Upper lobe of right lung (tissue), 1 donor: ENCODE measurements at regions of chr5 and their contacts with region 1.

Region 1: GRCh38 chr5:135880278-135880677 is 15.4 kb downstream of the IL9 start:
- DNase-seq: no peak
- ATAC-seq: no peak
- H3K4me3 ChIP-seq: no peak overlapping the region
- H3K27ac ChIP-seq: no peak overlapping the region
- H3K4me1 ChIP-seq: no peaks in the 10 kb centered on the region
- H3K27me3 ChIP-seq: peaks cover 20% of the 10 kb centered on the region
- CTCF ChIP-seq: no peak

Region 2: GRCh38 chr5:135714126-135714894 is 166.0 kb before region 1 on chr5:
- intact Hi-C with region 1: no loop called
- DNase-seq: no peak
- ATAC-seq: no peak
- H3K4me3 ChIP-seq: no peak overlapping the region
- H3K27ac ChIP-seq: no peak overlapping the region
- H3K4me1 ChIP-seq: no peaks in the 10 kb centered on the region
- H3K27me3 ChIP-seq: no peaks in the 10 kb centered on the region
- CTCF ChIP-seq: no peak

Region 3: GRCh38 chr5:135979510-135979909 is 99.2 kb after region 1 on chr5:
- intact Hi-C with region 1: no loop called
- DNase-seq: no peak
- ATAC-seq: no peak
- H3K4me3 ChIP-seq: no peak overlapping the region
- H3K27ac ChIP-seq: no peak overlapping the region
- H3K4me1 ChIP-seq: no peaks in the 10 kb centered on the region
- H3K27me3 ChIP-seq: no peaks in the 10 kb centered on the region
- CTCF ChIP-seq: no peak

Region 4: DNA sequence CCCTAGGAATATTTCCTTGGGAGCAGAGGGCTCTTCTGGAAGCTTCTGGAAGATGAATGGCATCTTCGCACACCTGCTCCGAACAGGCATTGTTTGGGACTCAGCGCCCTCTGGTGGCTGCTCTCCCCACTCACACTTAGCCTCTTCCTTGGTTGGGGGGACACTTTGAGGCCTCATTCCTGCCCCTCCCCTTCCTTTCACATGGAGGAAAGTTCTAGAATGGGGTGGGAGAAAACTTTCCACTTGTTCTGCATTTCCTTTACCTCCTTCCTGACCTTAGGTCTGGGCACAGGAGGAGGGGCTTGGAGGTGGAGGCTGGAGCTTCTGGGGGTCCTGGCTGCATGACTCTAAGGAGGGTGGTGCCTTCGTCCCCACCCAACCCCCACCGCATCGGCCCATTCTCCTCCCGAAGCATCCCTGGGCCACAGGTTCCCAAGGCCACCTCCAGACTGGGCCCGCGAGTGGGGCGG is 332.0 kb after region 1 on chr5:
- intact Hi-C with region 1: loop called (anchors 5 kb)
- DNase-seq: peak; percentile 78
- ATAC-seq: peak; percentile 70
- H3K4me3 ChIP-seq: no peak overlapping the region
- H3K27ac ChIP-seq: no peak overlapping the region
- H3K4me1 ChIP-seq: no peaks in the 10 kb centered on the region
- H3K27me3 ChIP-seq: peaks cover 17% of the 10 kb centered on the region
- CTCF ChIP-seq: peak; percentile 88